ENCODE measurements at regions of chr12 and their contacts with region 1.

Region 1: DNA sequence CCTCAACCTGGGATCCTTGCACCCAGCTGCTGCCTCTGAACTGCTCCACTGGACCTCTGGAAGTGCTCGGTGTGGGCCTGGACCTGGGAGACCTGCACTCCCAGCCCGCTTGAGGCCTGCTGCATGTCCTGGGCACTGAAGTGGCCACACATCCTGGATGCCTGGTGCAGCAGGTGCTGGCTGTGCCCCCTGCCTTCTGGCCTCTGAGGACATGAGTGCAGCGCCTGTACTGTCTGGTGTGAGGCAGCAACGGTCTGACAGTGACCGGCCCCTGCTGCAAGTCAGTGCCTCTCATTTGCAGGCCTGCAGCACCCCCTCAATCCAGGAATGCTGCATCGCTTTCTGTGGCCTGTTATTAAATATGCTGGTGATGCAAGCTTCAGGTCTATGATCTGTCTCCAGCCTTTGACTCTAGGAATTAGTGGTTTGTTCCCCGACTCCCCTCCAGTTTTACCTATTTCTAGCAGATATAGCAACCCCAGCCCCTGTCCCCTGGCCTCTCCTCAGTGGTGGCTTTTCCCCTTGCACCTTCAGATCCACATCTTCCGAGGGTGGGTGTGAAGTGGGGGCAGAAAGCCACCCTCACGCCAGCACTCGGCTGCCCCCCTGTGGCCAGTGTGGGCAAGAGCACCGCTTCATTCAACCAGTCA is 3.6 kb downstream of the SMIM41 start:
- DNase-seq: peak in 1 of 2 experiments; percentile 85
- H3K4me3 ChIP-seq: no peak overlapping the region
- H3K27ac ChIP-seq: no peak overlapping the region
- H3K4me1 ChIP-seq: peaks cover 5 to 37% (median 14%) of the 10 kb centered on the region in 4 experiments; a peak in 6 of 7 replicates
- H3K27me3 ChIP-seq: peaks cover 0 to 14% (median 1%) of the 10 kb centered on the region in 4 experiments; a peak in 5 of 7 replicates
- CTCF ChIP-seq: peak in 2 of 3 experiments; percentile 92 to 97; a peak in 3 of 4 replicates
- EP300 ChIP-seq: no peak
- POLR2A ChIP-seq: no peak
- RAD21 ChIP-seq: peak; percentile 82

Region 2: DNA sequence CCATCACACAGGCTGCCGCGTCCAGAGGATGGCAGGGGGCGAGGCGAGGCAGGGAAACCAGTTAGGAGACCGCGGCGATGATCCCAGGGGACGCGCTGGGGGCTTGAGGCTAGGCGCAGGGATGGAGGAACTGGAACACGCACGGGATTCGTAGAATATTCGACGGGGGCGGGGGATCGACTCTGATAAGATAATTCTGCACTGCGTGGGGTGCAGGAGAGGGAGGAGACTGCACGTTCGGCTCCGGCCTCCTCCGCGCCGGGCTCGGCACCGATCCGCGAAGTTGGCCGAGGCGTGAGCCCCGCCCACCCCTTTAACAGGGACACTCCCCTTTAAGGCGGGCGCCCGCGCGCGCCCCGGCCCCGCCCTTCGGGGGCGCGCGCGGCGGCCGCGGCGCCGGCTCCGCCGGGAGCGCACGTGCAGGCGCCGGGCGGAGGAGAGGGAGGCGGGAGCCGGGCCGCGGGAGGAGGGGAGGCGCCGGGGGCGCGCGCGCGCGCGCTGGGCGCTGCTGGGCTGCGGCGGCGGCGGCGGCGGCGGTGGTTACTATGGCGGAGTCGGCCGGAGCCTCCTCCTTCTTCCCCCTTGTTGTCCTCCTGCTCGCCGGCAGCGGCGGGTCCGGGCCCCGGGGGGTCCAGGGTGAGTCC is 131.8 kb before region 1 on chr12 and contains the start of gene ACVR1B:
- CTCF ChIA-PET with region 1: no interaction called
- POLR2A ChIA-PET with region 1: no interaction called
- DNase-seq: peak in 1 of 2 experiments; percentile 87
- H3K4me3 ChIP-seq: peak within 1 kb of the TSS; percentile 73 to 95 (median 90)
- H3K27ac ChIP-seq: peak within 1 kb of the TSS; percentile 52; the same call in 1 of the 2 replicates
- H3K4me1 ChIP-seq: peaks cover 0 to 3% (median 2%) of the 10 kb centered on the region in 4 experiments; a peak in 6 of 7 replicates
- H3K27me3 ChIP-seq: peaks cover 7 to 47% (median 34%) of the 10 kb centered on the region in 4 experiments
- CTCF ChIP-seq: no peak
- EP300 ChIP-seq: no peak
- POLR2A ChIP-seq: peak in 1 of 2 experiments; percentile 1; a peak in 1 of 3 replicates
- RAD21 ChIP-seq: no peak
- total RNA-seq, gene ACVR1B: 13.5 and 16.0 TPM in 2 replicates

Region 3: GRCh38 chr12:52004042-52004648 is 79.0 kb before region 1 on chr12:
- CTCF ChIA-PET with region 1: interaction called, 13 read pairs
- POLR2A ChIA-PET with region 1: interaction called, 4 read pairs
- DNase-seq: peak in 1 of 2 experiments; percentile 81
- H3K4me3 ChIP-seq: no peak overlapping the region
- H3K27ac ChIP-seq: no peak overlapping the region
- H3K4me1 ChIP-seq: peaks cover 0 to 16% (median 8%) of the 10 kb centered on the region in 4 experiments; a peak in 6 of 7 replicates
- H3K27me3 ChIP-seq: peaks cover 19 to 47% (median 44%) of the 10 kb centered on the region in 4 experiments
- CTCF ChIP-seq: peak in 2 of 3 experiments; percentile 83 to 93; a peak in 3 of 4 replicates
- EP300 ChIP-seq: no peak
- POLR2A ChIP-seq: no peak
- RAD21 ChIP-seq: peak; percentile 91 to 95

Region 4: GRCh38 chr12:52041695-52042123 is 41.4 kb before region 1 on chr12:
- CTCF ChIA-PET with region 1: interaction called, 17 read pairs
- POLR2A ChIA-PET with region 1: interaction called, 16 read pairs
- DNase-seq: no peak
- H3K4me3 ChIP-seq: no peak overlapping the region
- H3K27ac ChIP-seq: no peak overlapping the region
- H3K4me1 ChIP-seq: peaks cover 0 to 3% (median 0%) of the 10 kb centered on the region in 4 experiments; a peak in 2 of 7 replicates
- H3K27me3 ChIP-seq: no peaks in the 10 kb centered on the region; a peak in 3 of 7 replicates
- CTCF ChIP-seq: peak in 1 of 3 experiments; percentile 2; a peak in 1 of 4 replicates
- EP300 ChIP-seq: no peak
- POLR2A ChIP-seq: no peak
- RAD21 ChIP-seq: no peak

Region 5: GRCh38 chr12:52050761-52051541 is 32.2 kb before region 1 on chr12 and contains the start of gene NR4A1:
- CTCF ChIA-PET with region 1: interaction called, 15 read pairs
- POLR2A ChIA-PET with region 1: interaction called, 18 read pairs
- DNase-seq: peak in 1 of 2 experiments; percentile 87
- H3K4me3 ChIP-seq: peak within 1 kb of the TSS; percentile 44 to 72 (median 64)
- H3K27ac ChIP-seq: no peak within 1 kb of the TSS
- H3K4me1 ChIP-seq: peaks cover 0 to 19% (median 9%) of the 10 kb centered on the region in 4 experiments; a peak in 6 of 7 replicates
- H3K27me3 ChIP-seq: peaks cover 4 to 44% (median 36%) of the 10 kb centered on the region in 4 experiments
- CTCF ChIP-seq: no peak
- EP300 ChIP-seq: 0 out of 3 replicates have a peak, but pooled peaks of 1 of the 2 experiments have one; percentile 7
- POLR2A ChIP-seq: no peak; a peak in 1 of 3 replicates
- RAD21 ChIP-seq: no peak
- total RNA-seq, gene NR4A1: 18.7 and 19.3 TPM in 2 replicates

Region 6: GRCh38 chr12:52069327-52070184 is 13.6 kb before region 1 on chr12 and contains the start of gene ATG101:
- CTCF ChIA-PET with region 1: interaction called, 189 read pairs
- POLR2A ChIA-PET with region 1: interaction called, 17 read pairs
- DNase-seq: peak; percentile 82 to 90
- H3K4me3 ChIP-seq: peak within 1 kb of the TSS; percentile 89 to 97 (median 95)
- H3K27ac ChIP-seq: peak within 1 kb of the TSS; percentile 99
- H3K4me1 ChIP-seq: peaks cover 0 to 12% (median 3%) of the 10 kb centered on the region in 4 experiments; a peak in 4 of 7 replicates
- H3K27me3 ChIP-seq: no peaks in the 10 kb centered on the region; a peak in 2 of 7 replicates
- CTCF ChIP-seq: peak; percentile 88 to 96 (median 96)
- EP300 ChIP-seq: peak in 1 of 2 experiments; percentile 100; a peak in 2 of 3 replicates
- POLR2A ChIP-seq: peak in 1 of 2 experiments; percentile 69; a peak in 1 of 3 replicates
- RAD21 ChIP-seq: peak; percentile 19 to 29; a peak in 3 of 4 replicates
- total RNA-seq, gene ATG101: 48.9 and 49.8 TPM in 2 replicates

Region 7: DNA sequence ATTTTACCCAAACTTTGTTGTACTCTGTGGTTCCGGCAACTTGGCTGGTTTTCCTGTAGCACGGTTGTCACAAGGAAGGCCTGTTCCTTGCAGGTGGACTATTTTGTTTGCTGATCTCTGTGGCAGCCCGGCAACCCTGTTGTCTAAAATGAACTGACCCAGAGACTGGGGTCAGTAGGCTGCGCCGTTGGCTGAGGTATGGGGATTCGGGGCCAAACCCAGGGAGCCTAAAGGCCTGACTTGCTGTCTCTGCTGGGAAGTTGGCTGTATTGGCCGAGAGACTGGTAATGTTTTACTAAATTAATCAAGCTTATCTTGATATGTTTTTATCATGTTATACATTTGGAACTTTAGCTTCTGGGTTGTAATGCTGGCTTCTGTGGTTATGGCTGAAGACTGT is 10.2 kb after region 1 on chr12:
- CTCF ChIA-PET with region 1: interaction called, 11 read pairs
- POLR2A ChIA-PET with region 1: interaction called, 7 read pairs
- DNase-seq: no peak
- H3K4me3 ChIP-seq: no peak overlapping the region
- H3K27ac ChIP-seq: no peak overlapping the region
- H3K4me1 ChIP-seq: no peaks in the 10 kb centered on the region
- H3K27me3 ChIP-seq: no peaks in the 10 kb centered on the region
- CTCF ChIP-seq: no peak
- EP300 ChIP-seq: no peak
- POLR2A ChIP-seq: no peak
- RAD21 ChIP-seq: no peak

Region 8: GRCh38 chr12:52121824-52122539 is 38.9 kb after region 1 on chr12:
- CTCF ChIA-PET with region 1: interaction called, 36 read pairs
- POLR2A ChIA-PET with region 1: interaction called, 8 read pairs
- DNase-seq: peak; percentile 59 to 90
- H3K4me3 ChIP-seq: peak overlapping the region in 2 of 4 experiments; percentile 4 to 51; a peak in 3 of 8 replicates
- H3K27ac ChIP-seq: no peak overlapping the region
- H3K4me1 ChIP-seq: peaks cover 29 to 46% (median 34%) of the 10 kb centered on the region in 4 experiments
- H3K27me3 ChIP-seq: no peaks in the 10 kb centered on the region
- CTCF ChIP-seq: peak; percentile 73 to 83 (median 78)
- EP300 ChIP-seq: 0 out of 3 replicates have a peak, but pooled peaks of 1 of the 2 experiments have one; percentile 28
- POLR2A ChIP-seq: no peak
- RAD21 ChIP-seq: peak; percentile 60 to 74

Measured in H1 (cell line).